Heart right ventricle (tissue), 16 donors: ENCODE measurements at regions of chr6 and their contacts with region 1.

Region 1: DNA sequence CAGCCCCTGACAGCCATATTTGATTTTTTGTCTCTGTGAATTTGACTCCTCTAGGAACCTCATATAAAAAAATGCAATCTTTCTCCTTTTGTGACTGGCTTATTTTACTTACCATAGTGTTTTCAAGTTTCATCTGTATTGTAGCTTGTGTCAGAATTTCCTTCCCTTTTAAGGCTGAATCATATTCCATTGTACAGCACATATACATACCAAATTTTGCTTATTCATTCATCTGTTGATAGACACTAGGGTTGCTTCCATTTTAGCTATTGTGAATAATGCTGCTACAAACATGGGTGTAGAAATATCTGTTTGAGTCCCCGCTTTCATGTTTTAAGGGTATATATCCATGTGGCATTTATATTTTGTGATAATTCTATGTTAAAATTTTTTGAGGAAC is 49.2 kb upstream of the RNF217 start:
- DNase-seq: no peak
- ATAC-seq: no peak
- H3K4me3 ChIP-seq: no peak overlapping the region
- H3K27ac ChIP-seq: no peak overlapping the region
- H3K4me1 ChIP-seq: no peaks in the 10 kb centered on the region
- H3K27me3 ChIP-seq: no peaks in the 10 kb centered on the region
- CTCF ChIP-seq: no peak

Region 2: DNA sequence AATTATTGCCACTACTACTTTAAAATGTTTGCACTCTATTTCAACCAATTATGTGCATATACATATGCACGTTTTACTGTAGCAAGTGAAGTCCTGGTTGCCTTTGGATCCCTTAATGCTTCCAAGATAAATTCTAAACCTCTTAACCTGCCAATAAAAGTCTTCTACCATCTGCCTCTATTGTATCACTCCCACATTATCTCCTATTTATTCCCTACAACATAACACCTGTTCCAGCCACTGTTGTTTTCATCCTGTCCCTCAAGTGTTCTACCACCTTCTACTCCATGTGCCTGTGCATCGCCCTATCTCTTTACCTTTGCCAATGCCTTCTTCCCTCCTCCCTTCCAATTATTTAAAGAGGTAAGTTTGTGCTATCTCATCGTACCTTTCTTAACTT is 449.8 kb before region 1 on chr6:
- intact Hi-C with region 1: no loop called
- DNase-seq: no peak
- ATAC-seq: no peak
- H3K4me3 ChIP-seq: no peak overlapping the region
- H3K27ac ChIP-seq: no peak overlapping the region
- H3K4me1 ChIP-seq: no peaks in the 10 kb centered on the region
- H3K27me3 ChIP-seq: no peaks in the 10 kb centered on the region
- CTCF ChIP-seq: no peak

Region 3: GRCh38 chr6:124958759-124959354 is 45.8 kb after region 1 on chr6:
- intact Hi-C with region 1: no loop called
- DNase-seq: no peak
- ATAC-seq: no peak
- H3K4me3 ChIP-seq: no peak overlapping the region
- H3K27ac ChIP-seq: no peak overlapping the region
- H3K4me1 ChIP-seq: peaks cover 0 to 28% (median 14%) of the 10 kb centered on the region in 9 donors
- H3K27me3 ChIP-seq: no peaks in the 10 kb centered on the region
- CTCF ChIP-seq: no peak

Region 4: DNA sequence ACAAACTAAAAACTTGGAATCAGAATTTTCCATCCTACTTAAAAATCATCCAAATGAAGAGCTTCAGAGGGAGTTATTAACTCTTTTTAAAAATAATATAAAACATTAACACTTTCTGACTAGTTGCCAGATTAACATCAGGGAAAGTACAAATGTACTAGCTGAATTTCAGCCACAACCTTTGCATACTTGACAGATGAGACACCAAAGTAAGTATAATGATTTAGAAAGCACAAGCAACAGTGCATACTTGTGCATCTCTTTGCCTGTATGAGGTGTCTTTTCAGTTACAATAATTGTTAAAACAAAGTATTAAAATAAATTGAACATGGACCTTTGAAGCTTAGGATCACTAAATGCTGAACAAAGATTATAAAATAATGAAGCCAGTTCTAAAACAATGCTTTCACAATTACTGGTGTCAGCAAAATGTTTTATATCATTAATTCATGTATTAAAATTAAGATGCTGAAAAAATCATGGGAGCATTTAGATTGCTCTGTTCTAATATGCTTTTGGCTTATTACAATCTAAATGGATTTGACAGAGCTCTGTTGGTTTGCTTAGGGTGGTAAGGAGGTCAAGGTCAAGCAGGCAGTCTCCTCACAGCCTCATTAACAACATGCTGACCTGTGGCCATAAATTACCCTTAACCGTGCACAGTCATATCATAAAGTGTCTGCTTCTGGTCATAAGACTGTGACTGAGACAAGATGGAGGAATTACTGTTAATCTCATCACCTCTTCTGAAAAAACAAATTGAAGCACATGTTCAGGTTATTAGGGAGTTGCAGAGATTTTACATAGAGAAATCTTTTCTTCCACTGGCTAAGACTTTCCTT is 64.2 kb after region 1 on chr6:
- intact Hi-C with region 1: loop called in 1 of 10 experiments (anchors 2 kb)
- DNase-seq: no peak
- ATAC-seq: no peak
- H3K4me3 ChIP-seq: no peak overlapping the region
- H3K27ac ChIP-seq: no peak overlapping the region
- H3K4me1 ChIP-seq: peaks cover 0 to 13% (median 0%) of the 10 kb centered on the region in 9 donors
- H3K27me3 ChIP-seq: no peaks in the 10 kb centered on the region
- CTCF ChIP-seq: no peak